Endothelial cell of umbilical vein (primary cell): ENCODE measurements at regions of chr13 and their contacts with region 1.

Region 1: DNA sequence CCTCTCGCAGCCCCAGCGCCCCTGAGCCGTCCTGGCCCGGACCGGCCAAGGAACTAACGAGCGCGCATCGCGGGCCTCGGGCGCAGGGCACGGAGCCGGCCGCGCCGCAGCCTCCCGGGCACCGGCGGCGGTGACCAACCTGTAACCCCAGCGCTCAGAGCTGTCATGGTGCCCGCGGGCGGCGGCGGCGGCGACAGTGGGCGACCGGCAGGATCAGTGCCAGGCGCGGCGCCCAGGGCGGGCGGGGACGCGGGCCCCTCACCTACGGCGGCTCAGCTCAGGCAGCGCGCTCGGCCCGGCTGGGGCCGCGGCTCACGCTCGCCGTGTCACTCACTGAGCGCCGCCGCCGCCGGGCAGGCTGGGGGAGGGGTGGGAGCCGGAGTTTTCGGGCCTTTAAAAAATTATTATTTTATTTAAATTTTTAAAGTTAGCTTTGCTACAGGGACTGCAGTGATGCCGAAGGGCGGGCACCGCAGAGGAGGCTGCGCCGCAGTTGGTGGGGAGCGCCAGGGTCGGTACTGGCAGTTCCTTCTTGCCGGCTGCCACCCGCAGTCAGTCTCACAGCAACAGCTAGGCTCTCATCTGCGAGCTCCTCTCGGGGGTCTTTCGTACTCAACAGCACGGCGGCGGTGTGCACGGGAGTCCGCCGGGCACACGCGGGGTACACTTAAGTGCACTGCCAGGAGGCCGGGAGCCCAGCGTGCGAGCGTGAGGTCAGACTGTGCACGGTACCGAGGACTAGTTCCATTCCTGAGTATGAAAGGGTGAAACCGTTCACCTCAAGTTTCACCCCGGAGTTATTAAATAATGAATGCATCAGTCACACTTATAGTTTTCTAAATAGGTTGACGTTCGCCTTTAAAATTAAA is at the start of gene NALCN:
- DNase-seq: peak; percentile 49
- H3K4me3 ChIP-seq: peak within 1 kb of the TSS; percentile 0 to 64 (median 43)
- H3K27ac ChIP-seq: no peak within 1 kb of the TSS
- H3K4me1 ChIP-seq: peaks cover 10% of the 10 kb centered on the region
- H3K27me3 ChIP-seq: no peaks in the 10 kb centered on the region
- CTCF ChIP-seq: no peak
- POLR2A ChIP-seq: no peak
- total RNA-seq, gene NALCN: 4.4 and 6.8 TPM in 2 replicates

Region 2: GRCh38 chr13:101231751-101232428 is 184.5 kb before region 1 on chr13:
- CTCF ChIA-PET with region 1: no interaction called
- POLR2A ChIA-PET with region 1: no interaction called
- dilution Hi-C with region 1: no loop called
- intact Hi-C with region 1: loop called (anchors 5 kb)
- DNase-seq: no peak
- H3K4me3 ChIP-seq: no peak overlapping the region
- H3K27ac ChIP-seq: no peak overlapping the region
- H3K4me1 ChIP-seq: no peaks in the 10 kb centered on the region
- H3K27me3 ChIP-seq: no peaks in the 10 kb centered on the region
- CTCF ChIP-seq: no peak
- POLR2A ChIP-seq: no peak

Region 3: DNA sequence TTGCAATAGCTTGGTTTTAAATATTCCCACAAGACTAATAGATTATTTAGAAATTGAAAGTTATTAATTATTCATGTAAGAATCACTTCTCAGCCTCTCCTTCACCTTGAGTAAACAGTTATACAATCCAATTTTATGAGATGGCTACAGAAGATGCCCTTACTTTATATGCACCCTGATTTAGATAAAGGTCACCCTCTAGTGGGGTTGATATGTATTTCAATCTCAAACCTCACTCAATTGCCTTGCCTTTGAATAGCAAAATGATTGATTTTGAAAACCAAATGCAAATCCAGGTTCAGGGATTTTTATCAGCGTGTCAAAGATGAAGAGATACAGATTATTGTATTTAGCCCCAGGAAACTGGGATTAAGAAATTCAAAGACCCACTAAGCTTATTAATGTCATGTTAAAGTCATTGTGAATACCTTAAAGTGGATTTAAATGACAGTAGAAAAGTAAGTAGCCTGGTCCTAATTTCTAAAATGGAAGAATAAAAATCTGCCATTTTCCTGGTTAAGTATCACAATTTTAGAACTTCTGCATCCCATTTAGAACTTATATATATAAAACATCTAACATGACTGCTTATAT is 341.1 kb after region 1 on chr13:
- CTCF ChIA-PET with region 1: no interaction called
- POLR2A ChIA-PET with region 1: no interaction called
- dilution Hi-C with region 1: no loop called
- intact Hi-C with region 1: loop called (anchors 5 kb)
- DNase-seq: peak; percentile 68
- H3K4me3 ChIP-seq: no peak overlapping the region
- H3K27ac ChIP-seq: no peak overlapping the region
- H3K4me1 ChIP-seq: no peaks in the 10 kb centered on the region
- H3K27me3 ChIP-seq: peaks cover 0 to 3% of the 10 kb centered on the region in 2 experiments
- CTCF ChIP-seq: peak; percentile 35 to 37
- POLR2A ChIP-seq: no peak